HepG2 (cell line): ENCODE measurements at regions of chr3 and their contacts with region 1.

Region 1: GRCh38 chr3:128402319-128402718 is 64.4 kb downstream of the DNAJB8 start:
- DNase-seq: peak; percentile 60
- ATAC-seq: peak; percentile 74
- H3K4me3 ChIP-seq: no peak overlapping the region
- H3K27ac ChIP-seq: no peak overlapping the region
- H3K4me1 ChIP-seq: peaks cover 19% of the 10 kb centered on the region
- H3K27me3 ChIP-seq: no peaks in the 10 kb centered on the region
- CTCF ChIP-seq: no peak
- EP300 ChIP-seq: no peak
- POLR2A ChIP-seq: no peak
- RAD21 ChIP-seq: no peak

Region 2: DNA sequence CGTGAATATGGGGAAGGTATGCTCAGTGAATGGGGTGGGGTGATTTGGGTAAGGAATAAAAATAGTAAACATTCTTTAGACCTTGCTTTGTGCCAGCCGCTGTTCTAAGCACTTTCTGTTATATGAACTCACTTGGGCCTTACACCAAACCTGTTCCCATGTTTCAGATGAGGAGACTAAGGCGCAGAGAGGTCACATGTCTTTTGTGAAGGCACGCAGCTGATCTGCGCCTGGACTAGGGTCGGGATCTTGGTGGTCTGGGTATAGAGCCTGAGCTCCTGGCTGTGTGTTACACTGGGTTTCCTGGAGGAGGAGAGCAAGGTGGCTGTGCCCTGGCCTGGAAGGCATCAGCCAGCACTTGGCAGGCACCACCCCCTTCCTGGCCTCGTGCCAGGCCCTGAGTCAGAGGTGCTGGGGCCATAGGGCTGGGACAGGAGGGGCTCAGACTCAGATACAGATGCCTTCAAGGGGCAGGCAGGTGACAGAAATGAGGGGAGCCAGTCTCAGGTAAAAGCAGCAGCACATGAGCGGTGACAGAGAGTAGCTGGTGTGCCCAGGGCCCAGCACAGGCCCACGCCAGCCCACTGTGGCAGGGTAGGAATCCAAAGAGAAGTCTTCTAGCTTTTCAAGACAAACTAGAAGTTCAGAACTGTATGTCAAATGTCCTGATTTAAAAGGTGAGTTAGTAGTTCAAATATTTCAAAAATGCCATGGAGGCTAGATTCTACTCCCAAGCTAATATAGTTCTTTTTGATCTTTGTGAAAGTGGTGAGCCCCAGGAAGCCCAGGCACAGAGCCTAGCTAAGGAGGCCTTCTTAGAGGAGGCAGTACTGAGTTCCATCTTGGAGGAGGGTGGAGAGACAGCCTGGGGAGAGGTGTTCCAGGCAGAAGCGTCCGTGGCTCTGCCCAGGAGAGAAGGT is 18.7 kb before region 1 on chr3:
- CTCF ChIA-PET with region 1: no interaction called
- POLR2A ChIA-PET with region 1: no interaction called
- in situ Hi-C with region 1: no loop called
- intact Hi-C with region 1: loop called (anchors 1 kb)
- DNase-seq: peak; percentile 37
- ATAC-seq: peak; percentile 23; the same call in 2 of the 3 replicates
- H3K4me3 ChIP-seq: no peak overlapping the region
- H3K27ac ChIP-seq: no peak overlapping the region
- H3K4me1 ChIP-seq: peaks cover 52% of the 10 kb centered on the region
- H3K27me3 ChIP-seq: no peaks in the 10 kb centered on the region
- CTCF ChIP-seq: no peak
- EP300 ChIP-seq: no peak
- POLR2A ChIP-seq: no peak
- RAD21 ChIP-seq: no peak